GM12878 (cell line): ENCODE measurements at regions of chr11 and their contacts with region 1.

Region 1: DNA sequence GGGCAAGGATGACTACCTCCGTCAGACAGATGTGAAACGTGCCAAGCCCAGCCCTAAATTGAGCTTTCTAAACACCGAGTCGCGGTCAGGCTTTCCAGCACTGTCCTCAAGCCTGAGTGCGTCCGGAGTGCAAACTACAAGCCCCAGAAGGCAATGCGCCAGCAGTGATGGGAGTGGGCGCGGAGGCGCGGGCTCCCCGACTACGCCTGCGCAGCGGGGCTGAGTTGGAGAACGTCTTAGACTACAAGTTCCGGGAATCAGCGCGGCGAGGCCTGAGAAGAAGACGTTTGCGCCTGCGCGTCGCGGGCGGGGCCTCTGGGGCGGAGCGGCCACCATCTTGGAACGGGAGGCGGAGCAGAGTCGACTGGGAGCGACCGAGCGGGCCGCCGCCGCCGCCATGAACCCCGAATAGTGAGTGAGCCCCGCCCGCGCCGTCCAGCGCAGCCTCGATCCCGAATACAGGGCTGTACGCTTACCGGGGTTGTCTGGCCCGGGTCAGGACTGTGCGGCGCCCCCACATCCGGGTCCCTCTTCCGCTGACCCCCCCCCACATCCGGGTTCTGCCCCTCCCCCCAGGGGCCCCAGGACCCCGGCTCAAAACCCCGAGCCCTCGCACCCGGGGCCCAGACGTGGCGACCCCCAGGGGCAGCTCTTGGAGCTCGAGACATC is at the start of gene RAB1B:
- DNase-seq: peak; percentile 98
- ATAC-seq: peak; percentile 89
- H3K4me3 ChIP-seq: peak within 1 kb of the TSS; percentile 96
- H3K27ac ChIP-seq: peak within 1 kb of the TSS; percentile 94
- H3K4me1 ChIP-seq: peaks cover 11% of the 10 kb centered on the region
- H3K27me3 ChIP-seq: no peaks in the 10 kb centered on the region
- CTCF ChIP-seq: no peak
- EP300 ChIP-seq: no peak
- POLR2A ChIP-seq: peak; percentile 75
- RAD21 ChIP-seq: no peak
- polyA plus RNA-seq, gene RAB1B: 10.4 to 15.6 TPM

Region 2: DNA sequence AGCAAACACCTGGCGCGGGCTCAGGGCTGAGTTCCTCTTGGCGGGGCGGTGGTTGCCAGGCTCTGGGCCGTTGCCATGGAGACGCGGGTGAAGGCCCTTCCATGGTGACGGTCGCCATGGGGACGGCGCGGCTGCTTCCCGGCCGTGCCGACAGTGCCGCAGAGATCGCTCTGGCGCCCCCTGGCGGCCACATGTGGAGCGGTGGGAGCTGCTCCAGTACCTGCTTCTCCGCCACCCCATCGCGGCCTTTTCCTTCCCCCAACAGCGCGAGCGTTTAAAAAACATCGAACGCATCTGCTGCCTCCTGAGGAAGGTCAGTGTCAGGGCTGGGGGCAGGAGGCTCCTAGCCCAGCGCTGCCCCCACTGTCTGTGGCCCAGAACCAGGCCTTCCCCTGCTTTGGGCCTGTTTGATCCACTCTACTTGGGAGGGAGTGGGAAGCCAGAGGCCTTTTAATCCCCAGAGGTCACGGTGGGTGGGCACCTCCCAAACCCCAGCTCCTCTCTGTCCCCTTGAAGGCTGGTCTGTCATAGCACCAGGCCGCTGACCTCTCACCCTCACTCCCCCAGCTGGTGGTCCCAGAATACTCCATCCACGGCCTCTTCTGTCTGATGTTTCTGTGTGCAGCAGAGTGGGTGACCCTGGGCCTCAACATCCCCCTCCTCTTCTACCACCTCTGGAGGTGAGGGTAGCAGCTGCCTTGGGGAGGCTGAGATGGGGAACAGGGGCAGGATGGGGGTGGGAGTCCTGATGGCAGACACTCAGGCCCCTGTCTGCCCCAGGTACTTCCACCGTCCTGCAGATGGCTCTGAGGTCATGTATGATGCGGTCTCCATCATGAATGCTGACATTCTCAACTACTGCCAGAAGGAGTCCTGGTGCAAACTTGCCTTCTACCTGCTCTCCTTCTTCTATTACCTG is 14.3 kb after region 1 on chr11:
- CTCF ChIA-PET with region 1: interaction called, 19 read pairs
- POLR2A ChIA-PET with region 1: interaction called, 26 read pairs
- RAD21 ChIA-PET with region 1: interaction called, 9 read pairs
- SMC1A ChIA-PET with region 1: interaction called, 10 read pairs
- in situ Hi-C with region 1: no loop called
- intact Hi-C with region 1: loop called (anchors 2 kb)
- DNase-seq: peak; percentile 65
- ATAC-seq: peak; percentile 95
- H3K4me3 ChIP-seq: no peak overlapping the region
- H3K27ac ChIP-seq: 0 out of 2 replicates have a peak overlapping the region, but pooled peaks have one; percentile 10
- H3K4me1 ChIP-seq: peaks cover 10% of the 10 kb centered on the region
- H3K27me3 ChIP-seq: no peaks in the 10 kb centered on the region
- CTCF ChIP-seq: peak; percentile 90 to 99 (median 97); a peak in 5 of 6 replicates
- EP300 ChIP-seq: peak; percentile 33 to 45; a peak in 1 of 4 replicates
- POLR2A ChIP-seq: peak; percentile 56
- RAD21 ChIP-seq: peak; percentile 42; the same call in 1 of the 2 replicates

Region 3: GRCh38 chr11:66288671-66289547 is 20.5 kb after region 1 on chr11 and contains the start of gene YIF1A:
- CTCF ChIA-PET with region 1: interaction called, 5 read pairs
- POLR2A ChIA-PET with region 1: interaction called, 26 read pairs
- RAD21 ChIA-PET with region 1: interaction called, 4 read pairs
- SMC1A ChIA-PET with region 1: interaction called, 3 read pairs
- in situ Hi-C with region 1: no loop called
- intact Hi-C with region 1: no loop called
- DNase-seq: peak; percentile 98
- ATAC-seq: peak; percentile 97
- H3K4me3 ChIP-seq: peak within 1 kb of the TSS; percentile 83
- H3K27ac ChIP-seq: peak within 1 kb of the TSS; percentile 87
- H3K4me1 ChIP-seq: peaks cover 15% of the 10 kb centered on the region
- H3K27me3 ChIP-seq: peaks cover 2 to 7% of the 10 kb centered on the region in 2 experiments; a peak in 2 of 4 replicates
- CTCF ChIP-seq: peak in 1 of 3 experiments; percentile 16; a peak in 2 of 6 replicates
- EP300 ChIP-seq: no peak
- POLR2A ChIP-seq: peak; percentile 90
- RAD21 ChIP-seq: no peak
- polyA plus RNA-seq, gene YIF1A: 6.6 to 17.5 TPM

Region 4: GRCh38 chr11:66386171-66387069 is 118.0 kb after region 1 on chr11:
- CTCF ChIA-PET with region 1: no interaction called
- POLR2A ChIA-PET with region 1: no interaction called
- RAD21 ChIA-PET with region 1: no interaction called
- SMC1A ChIA-PET with region 1: no interaction called
- in situ Hi-C with region 1: no loop called
- intact Hi-C with region 1: no loop called
- DNase-seq: peak; percentile 41
- ATAC-seq: peak; percentile 93
- H3K4me3 ChIP-seq: no peak overlapping the region
- H3K27ac ChIP-seq: no peak overlapping the region
- H3K4me1 ChIP-seq: peaks cover 2% of the 10 kb centered on the region; the same call in 1 of the 2 replicates
- H3K27me3 ChIP-seq: no peaks in the 10 kb centered on the region
- CTCF ChIP-seq: peak; percentile 84 to 98 (median 94)
- EP300 ChIP-seq: no peak
- POLR2A ChIP-seq: no peak
- RAD21 ChIP-seq: peak; percentile 62